IMR-90 (cell line): ENCODE measurements at regions of chr7 and their contacts with region 1.

Region 1: DNA sequence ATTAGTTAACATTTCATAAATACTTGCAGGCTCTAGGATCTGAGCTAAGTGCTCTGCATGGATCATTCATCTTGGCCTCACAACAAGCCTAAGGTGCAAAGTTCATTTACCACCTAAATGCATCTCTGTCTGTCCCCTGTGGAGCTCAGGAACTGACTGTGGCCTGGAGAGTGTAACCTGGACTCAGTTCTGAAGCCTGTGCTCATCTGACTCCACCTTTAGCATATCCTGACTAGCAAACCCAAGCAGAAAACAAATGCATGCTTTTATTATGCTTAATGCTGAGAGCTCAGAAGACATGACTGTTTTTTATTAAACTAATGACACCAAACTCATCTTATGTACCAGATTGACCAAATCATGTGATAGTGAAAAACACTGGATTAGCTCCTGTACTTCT is 245.6 kb upstream of the INHBA start:
- DNase-seq: no peak
- ATAC-seq: no peak
- H3K4me3 ChIP-seq: no peak overlapping the region
- H3K27ac ChIP-seq: no peak overlapping the region
- H3K4me1 ChIP-seq: no peaks in the 10 kb centered on the region; the same call in 1 of the 2 replicates
- H3K27me3 ChIP-seq: no peaks in the 10 kb centered on the region
- CTCF ChIP-seq: no peak
- POLR2A ChIP-seq: no peak
- RAD21 ChIP-seq: no peak

Region 2: GRCh38 chr7:41967156-41967555 is 18.7 kb after region 1 on chr7:
- CTCF ChIA-PET with region 1: no interaction called
- POLR2A ChIA-PET with region 1: no interaction called
- dilution Hi-C with region 1: no loop called
- in situ Hi-C with region 1: no loop called
- intact Hi-C with region 1: no loop called
- DNase-seq: peak; percentile 72
- ATAC-seq: peak; percentile 83
- H3K4me3 ChIP-seq: no peak overlapping the region
- H3K27ac ChIP-seq: peak overlapping the region; percentile 21; the same call in 1 of the 2 replicates
- H3K4me1 ChIP-seq: peaks cover 7% of the 10 kb centered on the region
- H3K27me3 ChIP-seq: no peaks in the 10 kb centered on the region
- CTCF ChIP-seq: no peak
- POLR2A ChIP-seq: no peak
- RAD21 ChIP-seq: no peak

Region 3: GRCh38 chr7:42831718-42832431 is 883.4 kb after region 1 on chr7:
- CTCF ChIA-PET with region 1: interaction called, 11 read pairs
- POLR2A ChIA-PET with region 1: no interaction called
- dilution Hi-C with region 1: no loop called
- in situ Hi-C with region 1: loop called (anchors 5 kb)
- intact Hi-C with region 1: loop called (anchors 1 kb)
- DNase-seq: peak; percentile 36
- ATAC-seq: peak; percentile 87
- H3K4me3 ChIP-seq: no peak overlapping the region
- H3K27ac ChIP-seq: no peak overlapping the region
- H3K4me1 ChIP-seq: peaks cover 8% of the 10 kb centered on the region; the same call in 1 of the 2 replicates
- H3K27me3 ChIP-seq: peaks cover 11% of the 10 kb centered on the region
- CTCF ChIP-seq: peak; percentile 58
- POLR2A ChIP-seq: no peak
- RAD21 ChIP-seq: peak; percentile 53